Left ventricle myocardium inferior (tissue), 1 donor: ENCODE measurements at regions of chr20 and their contacts with region 1.

Region 1: DNA sequence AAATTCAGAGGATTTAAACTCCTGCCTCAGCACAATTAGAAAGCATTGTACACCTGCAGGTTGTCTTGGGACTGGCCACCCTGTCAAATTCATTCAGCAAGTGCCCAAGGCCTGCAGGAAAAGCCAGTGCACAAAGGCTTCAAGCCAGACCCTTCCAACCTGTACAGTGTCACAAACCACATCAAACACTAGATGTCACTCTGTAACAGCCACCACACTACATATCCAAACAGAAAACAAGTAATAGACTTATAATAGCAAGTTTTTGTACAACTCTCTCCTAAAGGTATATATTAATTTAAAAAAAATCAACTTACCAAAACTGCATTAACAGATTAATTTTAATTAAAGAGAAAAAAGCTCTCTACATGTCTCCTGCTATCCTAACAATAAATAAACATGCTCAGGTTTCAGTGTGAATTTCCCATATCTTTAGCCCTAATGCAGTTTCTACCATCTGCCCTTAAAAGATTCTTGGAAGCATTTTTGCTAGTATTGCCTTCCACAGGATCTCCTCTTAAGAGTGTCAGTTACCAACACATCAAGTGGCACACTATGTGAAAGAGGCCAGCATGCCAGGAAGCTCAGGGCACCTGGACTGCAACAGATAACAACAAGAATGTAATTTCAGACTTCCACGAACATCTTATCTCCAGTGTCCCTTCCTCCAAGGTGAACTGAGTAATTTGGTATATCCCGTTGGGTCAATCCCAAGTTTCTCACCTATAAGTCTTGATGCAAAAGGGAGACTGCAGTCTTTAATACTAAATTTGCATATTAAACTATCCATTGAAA is 47.5 kb downstream of the RALGAPA2 start:
- DNase-seq: no peak
- H3K4me3 ChIP-seq: no peak overlapping the region
- H3K27ac ChIP-seq: no peak overlapping the region
- H3K4me1 ChIP-seq: peaks cover 31% of the 10 kb centered on the region
- H3K27me3 ChIP-seq: no peaks in the 10 kb centered on the region
- CTCF ChIP-seq: peak; percentile 79

Region 2: GRCh38 chr20:20480689-20481088 is 184.3 kb before region 1 on chr20:
- intact Hi-C with region 1: no loop called
- DNase-seq: no peak
- H3K4me3 ChIP-seq: no peak overlapping the region
- H3K27ac ChIP-seq: no peak overlapping the region
- H3K4me1 ChIP-seq: no peaks in the 10 kb centered on the region
- H3K27me3 ChIP-seq: no peaks in the 10 kb centered on the region
- CTCF ChIP-seq: no peak

Region 3: DNA sequence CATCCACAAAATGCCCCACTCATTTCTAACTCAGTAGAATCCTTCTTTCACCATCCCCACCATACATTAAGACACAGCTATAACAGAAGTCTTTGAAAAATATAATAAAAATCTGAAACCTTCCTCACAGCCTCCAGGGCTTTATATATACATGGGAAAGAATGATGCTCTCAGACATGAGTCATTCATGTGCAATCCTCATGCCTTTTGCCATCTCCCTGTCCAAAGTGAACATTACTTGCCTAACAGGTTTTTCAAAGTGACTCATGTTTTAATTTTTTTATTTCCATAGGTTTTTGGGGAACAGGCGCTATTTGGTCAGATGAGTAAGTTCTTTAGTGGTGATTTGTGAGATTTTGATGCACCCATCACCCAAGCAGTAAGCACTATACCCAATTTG is 115.3 kb before region 1 on chr20:
- intact Hi-C with region 1: no loop called
- DNase-seq: no peak
- H3K4me3 ChIP-seq: no peak overlapping the region
- H3K27ac ChIP-seq: no peak overlapping the region
- H3K4me1 ChIP-seq: no peaks in the 10 kb centered on the region
- H3K27me3 ChIP-seq: no peaks in the 10 kb centered on the region
- CTCF ChIP-seq: no peak

Region 4: DNA sequence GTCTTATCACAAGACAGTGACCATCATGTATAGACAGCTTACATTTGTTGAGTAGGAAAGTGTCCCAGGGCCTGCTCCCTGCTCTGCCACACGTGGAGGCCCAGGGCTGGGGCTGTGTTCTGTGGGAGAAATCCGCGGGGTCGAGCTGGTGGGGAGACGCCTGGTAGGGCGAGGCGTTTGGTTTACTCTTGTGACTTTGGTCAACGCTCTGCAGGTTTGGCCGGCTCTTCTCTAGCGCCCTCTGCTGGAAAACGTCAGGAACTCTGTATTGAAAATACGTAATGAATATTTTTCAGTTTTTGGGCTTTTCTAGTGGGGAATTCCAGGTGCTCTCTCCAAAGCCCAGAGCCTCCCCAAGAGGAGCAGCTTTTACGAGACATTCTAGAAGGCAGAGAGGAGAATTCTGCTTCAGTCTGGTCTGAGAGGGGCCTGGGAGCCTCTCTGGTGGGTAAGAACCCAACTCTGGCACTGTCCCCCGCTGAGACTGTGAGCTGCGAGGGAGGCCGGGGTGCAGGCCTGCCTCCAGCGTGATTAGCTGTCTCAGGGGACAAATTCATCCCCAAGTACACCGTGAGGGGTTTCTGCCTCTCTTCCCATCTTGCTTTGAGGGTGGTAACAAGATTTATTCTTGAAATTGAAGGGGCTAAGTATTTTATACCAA is 160.1 kb after region 1 on chr20:
- intact Hi-C with region 1: loop called (anchors 5 kb)
- DNase-seq: peak; percentile 28
- H3K4me3 ChIP-seq: peak overlapping the region; percentile 24
- H3K27ac ChIP-seq: no peak overlapping the region
- H3K4me1 ChIP-seq: peaks cover 12% of the 10 kb centered on the region
- H3K27me3 ChIP-seq: peaks cover 50% of the 10 kb centered on the region
- CTCF ChIP-seq: peak; percentile 89